ENCODE measurements at regions of chr11 and their contacts with region 1.

Region 1: DNA sequence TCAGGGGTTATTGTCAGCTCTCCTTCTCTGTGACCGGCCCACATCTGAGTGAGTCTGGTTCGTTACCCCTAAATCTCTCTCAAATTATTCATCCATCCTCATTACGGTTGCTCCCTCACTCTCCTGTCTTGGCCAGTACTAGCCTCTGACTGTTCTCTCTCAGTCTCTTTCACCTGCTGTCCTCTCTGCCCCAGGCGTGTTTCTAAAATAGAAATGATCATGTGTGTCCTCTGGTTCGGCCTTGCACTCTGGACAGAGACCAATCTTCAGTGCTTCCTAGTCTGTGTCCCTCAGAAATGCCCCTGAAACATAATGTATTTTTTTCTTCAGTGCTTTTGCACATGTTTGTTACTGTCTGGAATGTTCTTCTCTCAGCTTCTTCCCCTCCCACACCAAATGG is 4.9 kb downstream of the PSMD13 start:
- DNase-seq: no peak
- CTCF ChIP-seq: no peak

Region 2: GRCh38 chr11:363948-364761 is 122.5 kb after region 1 on chr11:
- in situ Hi-C with region 1: loop called (anchors 10 kb)
- DNase-seq: peak; percentile 61
- CTCF ChIP-seq: peak; percentile 7